Panc1 (cell line): ENCODE measurements at regions of chr14 and their contacts with region 1.

Region 1: DNA sequence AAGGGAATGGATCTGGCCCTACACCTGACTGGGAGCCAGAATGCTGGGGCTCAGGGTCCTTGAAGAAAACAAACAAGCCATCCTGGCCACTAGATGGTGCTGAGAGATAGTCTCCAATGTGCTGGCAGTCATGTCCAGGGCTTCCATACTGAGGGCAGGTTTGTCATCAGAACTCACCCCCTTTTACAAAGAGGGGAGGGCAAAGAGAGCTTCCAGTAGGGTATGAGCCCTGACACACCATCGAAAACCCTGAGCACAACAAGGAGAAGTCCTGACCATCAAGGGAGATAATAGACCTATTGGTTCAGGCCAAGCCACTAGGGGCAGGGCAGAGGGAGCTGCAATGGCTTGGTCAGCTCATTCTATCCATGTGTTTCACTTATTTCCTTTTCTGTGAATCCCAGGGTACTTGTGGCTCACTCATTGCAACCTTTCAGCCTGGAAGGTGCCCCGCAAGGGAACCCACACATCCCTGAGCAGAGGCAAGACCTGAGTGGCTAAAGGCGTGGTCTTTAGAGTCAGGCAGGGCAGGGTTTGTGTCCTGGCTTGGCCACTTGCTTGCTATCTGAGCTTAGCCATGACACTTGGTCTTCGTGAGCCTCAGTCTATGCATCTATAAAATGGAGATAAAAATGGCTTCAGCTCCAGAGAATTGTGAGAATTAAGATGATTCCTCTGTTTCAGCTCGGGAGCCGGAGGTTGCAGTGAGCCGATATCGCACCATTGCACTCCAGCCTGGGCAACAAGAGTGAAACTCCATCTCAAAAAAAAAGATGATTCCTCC is 6.2 kb upstream of the PLEKHH1 start:
- DNase-seq: peak; percentile 32
- ATAC-seq: peak; percentile 93
- H3K4me3 ChIP-seq: no peak overlapping the region
- H3K27ac ChIP-seq: no peak overlapping the region
- H3K4me1 ChIP-seq: no peaks in the 10 kb centered on the region
- H3K27me3 ChIP-seq: peaks cover 4% of the 10 kb centered on the region; the same call in 1 of the 2 replicates
- CTCF ChIP-seq: peak; percentile 89

Region 2: GRCh38 chr14:66782853-66783252 is 744.0 kb before region 1 on chr14:
- CTCF ChIA-PET with region 1: no interaction called
- POLR2A ChIA-PET with region 1: no interaction called
- in situ Hi-C with region 1: no loop called
- intact Hi-C with region 1: no loop called
- DNase-seq: no peak
- ATAC-seq: no peak
- H3K4me3 ChIP-seq: no peak overlapping the region
- H3K27ac ChIP-seq: no peak overlapping the region
- H3K4me1 ChIP-seq: no peaks in the 10 kb centered on the region
- H3K27me3 ChIP-seq: no peaks in the 10 kb centered on the region
- CTCF ChIP-seq: no peak

Region 3: DNA sequence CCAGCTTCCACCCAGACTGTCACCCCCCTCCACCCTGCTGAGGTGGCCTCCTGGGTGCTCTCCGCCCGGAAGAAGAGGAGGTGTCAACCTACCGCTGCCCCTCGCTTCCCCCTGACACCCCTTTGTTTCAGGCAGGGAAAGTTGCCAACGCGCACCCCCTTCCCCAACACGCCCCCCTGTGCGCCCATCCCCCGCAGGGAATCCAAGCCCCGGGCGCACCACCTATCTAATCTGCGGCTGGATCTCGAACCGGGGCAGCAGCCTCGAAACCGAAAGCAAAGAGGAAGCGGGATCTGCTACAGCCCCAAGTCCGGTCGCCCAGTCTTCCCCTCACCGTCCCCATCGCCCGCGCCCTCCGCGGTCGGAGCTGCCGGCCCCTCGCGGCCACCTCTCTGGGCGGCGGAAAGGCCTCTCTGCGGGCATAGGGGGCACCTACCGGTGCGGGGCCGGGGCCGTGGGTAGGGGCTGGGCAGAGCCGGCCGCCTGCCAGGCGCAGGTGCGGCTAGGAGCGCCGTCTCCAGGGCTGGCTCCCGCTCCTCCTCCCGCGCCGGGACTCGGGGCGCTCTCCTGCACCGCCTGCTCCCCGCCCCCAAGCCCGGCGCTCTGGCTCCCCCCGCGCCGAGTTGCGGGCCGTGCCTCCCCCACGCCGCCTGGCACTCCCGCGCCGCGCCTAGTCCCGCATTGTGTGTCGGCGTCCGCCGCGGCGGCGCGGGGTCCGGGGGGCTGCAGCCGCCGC is 12.1 kb before region 1 on chr14:
- CTCF ChIA-PET with region 1: interaction called, 9 read pairs
- POLR2A ChIA-PET with region 1: interaction called, 13 read pairs
- in situ Hi-C with region 1: no loop called
- intact Hi-C with region 1: no loop called
- DNase-seq: no peak
- ATAC-seq: peak; percentile 60
- H3K4me3 ChIP-seq: peak overlapping the region; percentile 53 to 57
- H3K27ac ChIP-seq: no peak overlapping the region
- H3K4me1 ChIP-seq: peaks cover 14% of the 10 kb centered on the region; the same call in 1 of the 2 replicates
- H3K27me3 ChIP-seq: no peaks in the 10 kb centered on the region; the same call in 1 of the 2 replicates
- CTCF ChIP-seq: no peak

Region 4: DNA sequence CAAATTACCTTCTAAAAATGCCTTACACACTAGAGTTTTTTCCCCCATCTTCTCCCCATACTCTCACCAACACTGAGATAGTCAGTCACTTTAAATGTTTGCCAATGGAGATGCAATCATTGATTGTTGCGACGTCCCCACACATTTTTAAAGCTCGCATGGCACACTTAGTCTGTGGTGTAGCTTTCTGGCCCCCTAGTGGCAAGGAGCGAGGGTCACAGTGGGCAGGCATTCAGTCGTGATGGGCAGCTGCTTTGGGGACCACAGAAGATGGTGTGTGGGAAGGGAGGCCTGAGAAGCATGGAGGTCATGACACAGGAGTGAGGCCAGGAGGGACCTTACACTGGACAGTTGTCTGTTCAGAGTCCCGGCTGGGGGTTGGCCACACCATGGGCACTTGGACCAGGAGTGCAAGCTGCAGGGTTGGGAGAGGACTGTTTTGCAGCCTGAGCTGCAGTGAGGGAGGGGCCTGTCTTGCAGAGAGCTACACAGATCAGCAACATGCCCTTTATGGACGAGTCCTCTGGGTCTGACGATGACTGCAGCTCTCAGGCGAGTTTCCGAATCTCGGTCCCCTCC is 44.5 kb after region 1 on chr14:
- CTCF ChIA-PET with region 1: interaction called, 51 read pairs
- POLR2A ChIA-PET with region 1: no interaction called
- in situ Hi-C with region 1: no loop called
- intact Hi-C with region 1: loop called (anchors 5 kb)
- DNase-seq: peak; percentile 30
- ATAC-seq: peak; percentile 95
- H3K4me3 ChIP-seq: no peak overlapping the region
- H3K27ac ChIP-seq: no peak overlapping the region
- H3K4me1 ChIP-seq: no peaks in the 10 kb centered on the region
- H3K27me3 ChIP-seq: no peaks in the 10 kb centered on the region
- CTCF ChIP-seq: peak; percentile 88